Posterior vena cava (tissue), 2 donors: ENCODE measurements at regions of chr19 and their contacts with region 1.

Region 1: GRCh38 chr19:4342615-4343369 is 570 bp upstream of the MPND start:
- DNase-seq: peak; percentile 98

Region 2: GRCh38 chr19:4310247-4311121 is 32.3 kb before region 1 on chr19:
- intact Hi-C with region 1: no loop called
- DNase-seq: no peak

Region 3: DNA sequence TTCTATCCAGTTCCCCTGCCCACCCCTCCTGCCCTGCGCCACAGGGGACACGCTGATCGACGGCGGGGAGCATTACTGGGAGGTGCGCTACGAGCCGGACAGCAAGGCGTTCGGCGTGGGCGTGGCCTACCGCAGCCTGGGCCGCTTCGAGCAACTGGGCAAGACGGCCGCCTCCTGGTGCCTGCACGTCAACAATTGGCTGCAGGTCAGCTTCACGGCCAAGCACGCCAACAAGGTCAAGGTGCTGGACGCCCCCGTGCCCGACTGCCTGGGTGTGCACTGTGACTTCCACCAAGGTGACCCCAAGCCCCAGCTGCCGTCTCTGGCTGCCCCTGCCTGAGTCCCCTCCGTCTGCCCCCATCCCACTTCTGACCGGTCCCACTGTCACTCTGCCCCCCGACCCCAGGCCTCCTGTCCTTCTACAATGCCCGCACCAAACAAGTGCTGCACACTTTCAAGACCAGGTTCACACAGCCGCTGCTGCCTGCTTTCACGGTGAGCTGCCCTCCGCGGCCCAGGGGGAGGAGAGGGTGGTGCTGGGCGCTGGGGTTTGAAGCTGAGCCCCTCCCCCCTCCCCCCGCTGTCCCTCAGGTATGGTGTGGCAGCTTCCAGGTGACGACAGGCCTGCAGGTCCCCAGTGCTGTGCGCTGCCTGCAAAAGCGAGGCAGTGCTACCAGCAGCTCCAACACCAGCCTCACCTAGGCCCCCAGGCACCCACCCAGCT is 19.7 kb before region 1 on chr19:
- intact Hi-C with region 1: no loop called
- DNase-seq: no peak

Region 4: GRCh38 chr19:4373601-4374497 is 31.1 kb after region 1 on chr19:
- intact Hi-C with region 1: loop called in 1 of 2 experiments (anchors 2 kb)
- DNase-seq: peak; percentile 86

Region 5: DNA sequence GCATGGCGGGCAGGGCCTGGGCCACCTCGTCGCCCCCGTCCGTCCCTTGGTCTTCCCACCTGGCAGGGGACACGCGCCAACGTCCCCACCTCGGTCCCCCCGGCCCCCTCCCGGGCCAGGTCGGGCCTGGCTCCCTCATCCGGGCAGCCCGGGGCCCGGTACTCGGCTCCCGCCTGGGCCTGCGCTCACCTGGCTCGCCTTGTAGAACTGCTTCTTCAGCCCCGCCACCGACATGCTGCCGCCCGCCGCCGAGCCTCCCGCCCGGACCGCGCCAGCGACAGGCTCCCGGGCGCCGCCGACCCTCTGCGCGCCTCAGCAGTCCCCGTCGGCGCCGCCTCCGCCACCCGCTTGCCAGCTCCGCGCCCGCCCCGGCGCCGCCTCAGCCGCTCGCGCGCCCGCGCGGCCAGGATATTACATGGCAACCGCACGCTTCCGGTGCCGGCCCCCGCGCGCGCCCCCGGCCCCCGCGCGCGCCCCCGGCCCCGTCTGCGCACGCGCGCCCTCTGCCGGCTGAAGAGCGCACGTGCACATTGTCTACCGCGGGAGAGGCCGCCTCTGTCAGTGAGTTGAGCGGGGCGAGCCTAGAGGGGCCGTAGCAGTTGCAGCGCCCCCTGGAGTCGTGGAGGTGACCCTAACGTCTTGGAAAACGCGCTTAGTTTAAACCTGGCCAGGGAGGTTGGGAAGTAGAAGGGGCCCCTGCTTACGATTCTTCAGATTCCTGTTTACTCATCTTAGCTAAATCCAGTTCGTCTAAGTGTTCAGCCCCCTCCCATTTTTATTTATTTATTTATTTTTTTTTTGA is 57.5 kb after region 1 on chr19 and contains the start of gene SH3GL1:
- intact Hi-C with region 1: loop called in 1 of 2 experiments (anchors 5 kb)
- DNase-seq: peak; percentile 97
- total RNA-seq, gene SH3GL1: 77.5 to 88.8 TPM